Activated CD4-positive, alpha-beta T cell treated with anti-CD3 and anti-CD28 coated beads for 36 hours (primary cell): ENCODE measurements at regions of chr1 and their contacts with region 1.

Region 1: DNA sequence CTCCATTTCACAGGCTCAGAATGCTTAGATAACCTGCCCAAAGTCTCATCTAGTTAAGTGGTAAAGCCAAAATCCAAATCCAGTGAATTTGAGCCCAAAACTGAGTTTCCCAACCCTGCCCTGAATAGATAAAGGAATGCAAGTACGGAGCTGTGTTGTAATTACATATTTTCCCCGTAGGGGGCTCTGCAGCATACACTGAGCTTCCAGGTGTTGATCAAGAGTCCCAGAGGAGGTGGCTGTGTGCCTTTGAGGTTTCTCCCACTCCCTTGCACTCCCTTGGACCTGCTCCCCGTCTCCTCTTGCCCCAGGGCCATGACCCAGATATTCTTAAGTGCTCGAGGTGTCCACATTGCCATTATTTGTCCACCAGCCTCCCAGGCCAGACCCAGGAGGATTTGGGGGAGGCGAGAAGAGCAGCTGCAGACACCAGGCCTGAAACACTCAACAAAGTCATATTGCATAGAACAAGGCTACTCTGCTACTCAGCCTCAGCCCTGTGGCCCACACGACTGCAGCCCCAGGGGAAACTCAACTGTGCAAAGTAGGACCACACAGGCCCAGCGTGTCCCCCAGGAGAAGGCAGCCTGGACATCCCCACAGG is 18.4 kb upstream of the LY9 start:
- DNase-seq: peak; percentile 64
- ATAC-seq: peak; percentile 38
- H3K4me3 Mint-ChIP-seq: no peak overlapping the region
- H3K27ac Mint-ChIP-seq: peak overlapping the region; percentile 5
- H3K4me1 Mint-ChIP-seq: peaks cover 50% of the 10 kb centered on the region
- H3K27me3 Mint-ChIP-seq: no peaks in the 10 kb centered on the region

Region 2: GRCh38 chr1:160031365-160032164 is 746.0 kb before region 1 on chr1 and contains the start of gene PIGM:
- CTCF ChIA-PET with region 1: no interaction called
- POLR2A ChIA-PET with region 1: no interaction called
- intact Hi-C with region 1: no loop called
- DNase-seq: peak; percentile 97
- ATAC-seq: peak; percentile 96
- H3K4me3 Mint-ChIP-seq: peak within 1 kb of the TSS; percentile 96
- H3K27ac Mint-ChIP-seq: peak within 1 kb of the TSS; percentile 92
- H3K4me1 Mint-ChIP-seq: peaks cover 34% of the 10 kb centered on the region
- H3K27me3 Mint-ChIP-seq: no peaks in the 10 kb centered on the region
- total RNA-seq, gene PIGM: 4.3 to 4.7 TPM

Region 3: GRCh38 chr1:160711602-160712311 is 65.8 kb before region 1 on chr1 and contains the start of gene CD48:
- CTCF ChIA-PET with region 1: interaction called, 15 read pairs
- POLR2A ChIA-PET with region 1: no interaction called
- intact Hi-C with region 1: no loop called
- DNase-seq: peak; percentile 70
- ATAC-seq: peak; percentile 40
- H3K4me3 Mint-ChIP-seq: no peak within 1 kb of the TSS
- H3K27ac Mint-ChIP-seq: no peak within 1 kb of the TSS
- H3K4me1 Mint-ChIP-seq: peaks cover 34% of the 10 kb centered on the region
- H3K27me3 Mint-ChIP-seq: no peaks in the 10 kb centered on the region
- total RNA-seq, gene CD48: 180 to 217 TPM

Region 4: DNA sequence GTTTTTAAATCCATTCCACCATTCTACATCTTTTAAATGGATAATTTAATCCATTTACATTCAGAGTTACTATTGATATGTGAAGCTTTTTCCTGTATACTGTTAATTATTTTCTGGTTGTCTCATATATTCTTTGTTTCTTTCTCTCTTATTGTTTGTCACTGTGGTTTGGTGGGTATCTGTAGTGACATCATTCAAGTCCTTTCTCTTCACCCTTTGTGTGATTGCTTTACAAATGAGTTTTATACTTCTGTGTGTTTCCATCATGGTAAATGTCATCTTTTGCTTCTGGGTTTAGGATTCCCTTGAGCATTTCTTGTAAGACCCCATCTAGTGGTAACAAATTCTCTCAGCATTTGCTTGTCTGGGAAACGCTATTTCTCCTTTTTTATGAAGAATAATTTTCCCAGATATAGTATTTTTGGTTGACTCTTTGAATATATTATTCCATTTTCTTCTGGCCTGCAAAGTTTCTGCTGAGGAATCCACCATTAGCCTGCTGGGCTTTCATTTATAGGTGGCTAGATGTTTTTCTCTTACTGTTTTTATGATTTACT is 28.6 kb after region 1 on chr1:
- CTCF ChIA-PET with region 1: interaction called, 37 read pairs
- POLR2A ChIA-PET with region 1: no interaction called
- intact Hi-C with region 1: no loop called
- DNase-seq: no peak
- ATAC-seq: peak; percentile 76
- H3K4me3 Mint-ChIP-seq: no peak overlapping the region
- H3K27ac Mint-ChIP-seq: peak overlapping the region; percentile 74
- H3K4me1 Mint-ChIP-seq: peaks cover 79% of the 10 kb centered on the region
- H3K27me3 Mint-ChIP-seq: no peaks in the 10 kb centered on the region

Region 5: GRCh38 chr1:160821628-160822027 is 44.0 kb after region 1 on chr1:
- CTCF ChIA-PET with region 1: interaction called, 14 read pairs
- POLR2A ChIA-PET with region 1: no interaction called
- intact Hi-C with region 1: no loop called
- DNase-seq: peak; percentile 35
- ATAC-seq: no peak
- H3K4me3 Mint-ChIP-seq: no peak overlapping the region
- H3K27ac Mint-ChIP-seq: no peak overlapping the region
- H3K4me1 Mint-ChIP-seq: no peaks in the 10 kb centered on the region
- H3K27me3 Mint-ChIP-seq: no peaks in the 10 kb centered on the region

Region 6: GRCh38 chr1:160877221-160877620 is 99.6 kb after region 1 on chr1:
- CTCF ChIA-PET with region 1: interaction called, 4 read pairs
- POLR2A ChIA-PET with region 1: no interaction called
- intact Hi-C with region 1: loop called in 1 of 2 experiments (anchors 5 kb)
- DNase-seq: no peak
- ATAC-seq: peak; percentile 70
- H3K4me3 Mint-ChIP-seq: no peak overlapping the region
- H3K27ac Mint-ChIP-seq: no peak overlapping the region
- H3K4me1 Mint-ChIP-seq: peaks cover 24% of the 10 kb centered on the region
- H3K27me3 Mint-ChIP-seq: no peaks in the 10 kb centered on the region